ENCODE measurements at regions of chr13 and their contacts with region 1.

Region 1: GRCh38 chr13:40102856-40103255 is 447.4 kb downstream of the COG6 start:
- DNase-seq: peak; percentile 98
- ATAC-seq: peak; percentile 86
- H3K4me3 Mint-ChIP-seq: peak overlapping the region; percentile 62
- H3K27ac Mint-ChIP-seq: peak overlapping the region; percentile 99
- H3K4me1 Mint-ChIP-seq: peaks cover 53% of the 10 kb centered on the region
- H3K27me3 Mint-ChIP-seq: no peaks in the 10 kb centered on the region

Region 2: GRCh38 chr13:39777527-39778061 is 325.3 kb before region 1 on chr13:
- CTCF ChIA-PET with region 1: interaction called, 4 read pairs
- POLR2A ChIA-PET with region 1: no interaction called
- intact Hi-C with region 1: loop called (anchors 1 kb)
- DNase-seq: peak; percentile 70
- ATAC-seq: peak; percentile 83
- H3K4me3 Mint-ChIP-seq: peak overlapping the region; percentile 5
- H3K27ac Mint-ChIP-seq: peak overlapping the region; percentile 96
- H3K4me1 Mint-ChIP-seq: peaks cover 54% of the 10 kb centered on the region
- H3K27me3 Mint-ChIP-seq: no peaks in the 10 kb centered on the region

Region 3: GRCh38 chr13:40132249-40132648 is 29.4 kb after region 1 on chr13:
- CTCF ChIA-PET with region 1: no interaction called
- POLR2A ChIA-PET with region 1: interaction called, 3 read pairs
- intact Hi-C with region 1: loop called (anchors 1 to 2 kb)
- DNase-seq: peak; percentile 77
- ATAC-seq: peak; percentile 85
- H3K4me3 Mint-ChIP-seq: no peak overlapping the region
- H3K27ac Mint-ChIP-seq: peak overlapping the region; percentile 72
- H3K4me1 Mint-ChIP-seq: peaks cover 37% of the 10 kb centered on the region
- H3K27me3 Mint-ChIP-seq: no peaks in the 10 kb centered on the region

Region 4: DNA sequence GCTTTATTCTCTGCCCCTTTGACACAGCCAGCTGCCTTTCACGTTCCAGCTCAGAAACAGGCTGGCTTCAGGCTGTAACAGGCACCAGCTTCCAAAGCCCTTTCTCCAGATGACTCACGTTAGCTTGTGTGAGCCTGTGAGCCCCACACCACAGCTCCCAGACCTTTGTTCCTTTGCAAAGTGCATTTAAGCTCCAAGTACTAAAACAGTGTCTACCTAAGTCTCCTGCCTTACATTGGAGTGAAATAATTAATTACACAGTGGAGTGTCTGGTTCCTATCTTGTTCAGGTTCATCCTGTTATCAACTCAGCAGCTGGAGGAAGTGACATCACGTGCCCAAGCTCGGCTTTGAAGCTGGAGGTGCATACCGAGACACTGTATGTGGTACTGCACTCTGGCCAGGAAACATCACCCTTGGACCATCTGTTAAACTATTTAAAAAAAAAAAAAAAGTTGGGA is 87.8 kb after region 1 on chr13:
- CTCF ChIA-PET with region 1: no interaction called
- POLR2A ChIA-PET with region 1: interaction called, 3 read pairs
- intact Hi-C with region 1: loop called (anchors 2 to 5 kb)
- DNase-seq: peak; percentile 81
- ATAC-seq: peak; percentile 43
- H3K4me3 Mint-ChIP-seq: peak overlapping the region; percentile 32
- H3K27ac Mint-ChIP-seq: peak overlapping the region; percentile 89
- H3K4me1 Mint-ChIP-seq: peaks cover 76% of the 10 kb centered on the region
- H3K27me3 Mint-ChIP-seq: no peaks in the 10 kb centered on the region

Region 5: DNA sequence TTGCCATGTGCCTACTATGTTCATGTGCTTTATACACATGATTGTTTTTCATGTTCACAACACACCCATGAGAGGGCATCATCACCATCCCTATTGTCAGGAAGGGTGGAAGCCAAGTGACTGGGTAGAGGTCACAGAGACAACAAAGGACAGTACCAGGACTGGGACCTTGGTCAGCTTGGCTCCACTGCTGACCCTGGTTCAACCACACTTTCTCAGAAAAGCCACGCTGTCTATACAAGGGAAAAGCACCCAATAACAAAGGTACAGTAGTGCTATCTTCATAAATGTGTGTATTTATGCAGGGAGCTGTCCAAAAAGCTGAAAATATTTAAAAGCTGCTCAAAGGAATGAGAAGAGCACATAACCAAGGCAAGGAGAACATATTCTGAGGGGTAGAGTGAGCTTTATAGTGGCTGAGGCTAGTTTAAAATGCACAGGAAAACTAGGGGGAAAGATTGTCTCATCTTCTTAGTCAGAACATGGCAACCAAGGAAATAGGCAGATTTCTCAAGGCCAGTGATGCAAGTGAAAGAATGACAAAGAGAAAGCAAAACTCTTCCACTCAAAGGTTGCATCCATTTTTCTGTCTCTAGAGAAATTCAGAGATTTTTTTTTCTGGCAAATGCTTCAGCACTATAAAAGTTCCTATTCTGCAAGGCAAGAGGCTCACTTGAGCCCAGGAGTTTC is 148.6 kb after region 1 on chr13:
- CTCF ChIA-PET with region 1: no interaction called
- POLR2A ChIA-PET with region 1: no interaction called
- intact Hi-C with region 1: loop called (anchors 2 to 5 kb)
- DNase-seq: peak; percentile 23
- ATAC-seq: peak; percentile 87
- H3K4me3 Mint-ChIP-seq: no peak overlapping the region
- H3K27ac Mint-ChIP-seq: peak overlapping the region; percentile 82
- H3K4me1 Mint-ChIP-seq: peaks cover 50% of the 10 kb centered on the region
- H3K27me3 Mint-ChIP-seq: no peaks in the 10 kb centered on the region

Region 6: DNA sequence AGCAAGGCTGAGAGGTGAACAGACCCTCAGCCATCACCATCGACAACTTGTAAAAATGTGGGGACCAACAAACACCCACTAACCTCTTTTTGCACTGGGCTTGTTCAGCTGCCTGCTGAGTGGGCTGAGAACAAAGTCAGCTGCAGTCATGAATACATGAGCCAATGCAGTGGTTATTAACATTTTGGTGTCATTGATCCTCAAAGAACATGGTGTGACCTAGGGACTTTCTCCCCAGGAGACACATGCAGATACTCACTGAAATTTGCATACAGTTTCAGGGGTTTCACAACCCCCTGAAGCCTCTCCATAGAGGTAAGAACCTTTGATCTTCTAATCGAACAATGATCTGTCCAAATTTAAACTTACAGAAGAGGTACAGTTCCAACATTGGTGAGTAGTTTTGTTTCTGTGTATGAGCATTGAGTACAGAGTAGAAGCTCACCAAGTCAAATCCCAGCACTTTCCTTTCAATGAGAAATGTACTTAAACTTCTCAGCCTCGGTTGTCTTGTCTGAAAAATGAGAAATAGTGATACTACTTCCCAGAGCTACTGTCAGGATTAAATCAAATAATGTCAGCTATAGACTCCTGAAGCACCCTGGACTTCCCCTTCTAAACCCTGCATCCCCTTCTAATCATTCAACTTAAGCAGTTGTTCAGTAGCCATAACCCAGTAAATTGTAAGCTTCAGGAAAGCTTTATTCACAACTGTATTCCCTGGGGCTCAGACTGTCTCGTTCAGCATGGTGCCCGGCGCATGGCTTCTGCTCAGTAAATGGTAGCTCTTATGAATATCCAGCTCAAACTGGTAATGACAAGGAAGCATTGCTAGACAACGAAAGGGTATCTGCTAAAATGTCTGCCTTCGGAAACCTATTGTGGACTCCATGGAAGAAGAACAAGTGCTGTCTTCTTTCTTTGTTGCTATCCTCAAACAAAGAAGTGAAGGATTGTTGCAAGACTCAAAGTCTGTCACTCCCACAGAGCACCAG is 414.9 kb after region 1 on chr13:
- CTCF ChIA-PET with region 1: no interaction called
- POLR2A ChIA-PET with region 1: no interaction called
- intact Hi-C with region 1: loop called (anchors 1 to 10 kb)
- DNase-seq: peak; percentile 54
- ATAC-seq: peak; percentile 71
- H3K4me3 Mint-ChIP-seq: peak overlapping the region; percentile 44
- H3K27ac Mint-ChIP-seq: peak overlapping the region; percentile 91
- H3K4me1 Mint-ChIP-seq: peaks cover 84% of the 10 kb centered on the region
- H3K27me3 Mint-ChIP-seq: no peaks in the 10 kb centered on the region

Region 7: DNA sequence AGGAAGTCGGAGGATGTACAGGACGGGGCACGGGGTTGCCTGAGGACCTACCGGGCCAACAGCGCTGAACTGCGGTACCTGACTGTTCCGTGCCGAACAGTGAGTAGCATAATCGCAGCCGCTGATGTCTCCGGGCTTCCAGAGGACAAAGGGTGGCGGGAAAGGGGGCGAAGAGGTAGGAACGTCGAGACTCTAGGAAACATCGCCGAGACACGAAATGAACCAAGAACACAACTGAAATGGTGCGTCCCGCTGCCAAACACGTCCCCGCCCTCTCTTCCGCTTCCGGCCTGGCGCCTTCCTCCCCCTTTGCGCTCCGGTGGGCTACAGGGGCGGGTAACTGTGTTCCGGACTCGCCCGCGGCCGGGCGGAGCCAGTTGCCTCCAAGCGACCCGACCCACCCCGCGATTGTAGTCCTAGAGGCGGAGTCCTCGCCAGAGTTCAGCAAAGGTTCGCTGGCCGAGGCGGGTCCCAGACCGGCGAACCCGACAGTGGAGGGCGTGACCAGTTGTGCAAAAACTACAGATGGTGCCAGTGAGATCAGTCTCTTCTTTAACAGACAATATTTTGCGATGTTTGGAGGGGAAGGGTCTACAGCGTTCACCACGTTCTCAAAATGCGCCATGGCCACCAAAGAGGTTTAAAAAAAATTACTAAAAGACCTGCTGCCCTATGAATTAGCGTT is 668.2 kb after region 1 on chr13 and contains the start of gene MRPS31:
- CTCF ChIA-PET with region 1: no interaction called
- POLR2A ChIA-PET with region 1: no interaction called
- intact Hi-C with region 1: loop called in 1 of 2 experiments (anchors 2 kb)
- DNase-seq: peak; percentile 97
- ATAC-seq: peak; percentile 99
- H3K4me3 Mint-ChIP-seq: peak within 1 kb of the TSS; percentile 89
- H3K27ac Mint-ChIP-seq: peak within 1 kb of the TSS; percentile 97
- H3K4me1 Mint-ChIP-seq: peaks cover 30% of the 10 kb centered on the region
- H3K27me3 Mint-ChIP-seq: no peaks in the 10 kb centered on the region
- total RNA-seq, gene MRPS31: 45.8 to 46.1 TPM